CD8-positive, alpha-beta T cell (primary cell): ENCODE measurements at regions of chr4 and their contacts with region 1.

Region 1: GRCh38 chr4:173318648-173319211 is 15.4 kb downstream of the HMGB2 start:
- DNase-seq: peak in 2 of 9 experiments; percentile 48 to 60
- ATAC-seq: peak; percentile 66
- H3K4me3 ChIP-seq: no peak overlapping the region
- H3K4me3 Mint-ChIP-seq: no peak overlapping the region
- H3K27ac ChIP-seq: no peak overlapping the region
- H3K27ac Mint-ChIP-seq: no peak overlapping the region
- H3K4me1 ChIP-seq: no peaks in the 10 kb centered on the region
- H3K4me1 Mint-ChIP-seq: no peaks in the 10 kb centered on the region
- H3K27me3 ChIP-seq: no peaks in the 10 kb centered on the region
- H3K27me3 Mint-ChIP-seq: no peaks in the 10 kb centered on the region
- CTCF ChIP-seq: peak; percentile 66

Region 2: DNA sequence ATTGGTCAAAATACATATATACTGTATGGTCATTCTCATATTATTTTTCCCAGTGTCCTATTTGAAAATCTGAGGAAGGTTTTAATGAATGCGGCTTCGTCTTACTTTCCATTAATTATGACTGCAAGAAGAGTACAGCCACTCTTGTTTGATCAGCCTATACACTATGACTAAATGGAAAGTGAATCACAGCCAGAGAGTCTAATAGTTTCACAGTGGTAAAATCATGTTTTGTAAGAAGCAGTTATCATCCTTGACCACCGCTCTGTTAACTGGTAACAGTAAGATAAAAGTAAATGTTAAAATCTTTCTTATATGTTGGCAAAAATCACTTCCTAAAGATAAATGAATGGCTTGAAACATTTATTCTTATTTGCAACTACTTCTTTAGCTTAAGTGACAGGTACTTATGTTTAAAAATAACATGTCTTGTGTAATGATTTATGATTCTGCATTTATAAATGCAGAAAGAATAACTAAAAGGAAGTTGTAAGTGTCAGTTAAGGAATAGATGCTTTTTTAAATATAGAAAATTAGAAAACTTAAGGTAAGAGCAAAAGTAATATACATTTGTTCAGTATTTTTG is 136.9 kb before region 1 on chr4:
- CTCF ChIA-PET with region 1: no interaction called
- POLR2A ChIA-PET with region 1: no interaction called
- intact Hi-C with region 1: no loop called
- DNase-seq: no peak
- ATAC-seq: no peak
- H3K4me3 ChIP-seq: no peak overlapping the region
- H3K4me3 Mint-ChIP-seq: no peak overlapping the region
- H3K27ac ChIP-seq: no peak overlapping the region
- H3K27ac Mint-ChIP-seq: no peak overlapping the region
- H3K4me1 ChIP-seq: no peaks in the 10 kb centered on the region
- H3K4me1 Mint-ChIP-seq: peaks cover 27% of the 10 kb centered on the region
- H3K27me3 ChIP-seq: no peaks in the 10 kb centered on the region
- H3K27me3 Mint-ChIP-seq: no peaks in the 10 kb centered on the region
- CTCF ChIP-seq: no peak

Region 3: GRCh38 chr4:173230062-173230461 is 88.7 kb before region 1 on chr4:
- CTCF ChIA-PET with region 1: no interaction called
- POLR2A ChIA-PET with region 1: no interaction called
- intact Hi-C with region 1: no loop called
- DNase-seq: no peak
- ATAC-seq: no peak
- H3K4me3 ChIP-seq: no peak overlapping the region
- H3K4me3 Mint-ChIP-seq: no peak overlapping the region
- H3K27ac ChIP-seq: no peak overlapping the region
- H3K27ac Mint-ChIP-seq: no peak overlapping the region
- H3K4me1 ChIP-seq: no peaks in the 10 kb centered on the region
- H3K4me1 Mint-ChIP-seq: peaks cover 9% of the 10 kb centered on the region
- H3K27me3 ChIP-seq: no peaks in the 10 kb centered on the region
- H3K27me3 Mint-ChIP-seq: no peaks in the 10 kb centered on the region
- CTCF ChIP-seq: no peak

Region 4: DNA sequence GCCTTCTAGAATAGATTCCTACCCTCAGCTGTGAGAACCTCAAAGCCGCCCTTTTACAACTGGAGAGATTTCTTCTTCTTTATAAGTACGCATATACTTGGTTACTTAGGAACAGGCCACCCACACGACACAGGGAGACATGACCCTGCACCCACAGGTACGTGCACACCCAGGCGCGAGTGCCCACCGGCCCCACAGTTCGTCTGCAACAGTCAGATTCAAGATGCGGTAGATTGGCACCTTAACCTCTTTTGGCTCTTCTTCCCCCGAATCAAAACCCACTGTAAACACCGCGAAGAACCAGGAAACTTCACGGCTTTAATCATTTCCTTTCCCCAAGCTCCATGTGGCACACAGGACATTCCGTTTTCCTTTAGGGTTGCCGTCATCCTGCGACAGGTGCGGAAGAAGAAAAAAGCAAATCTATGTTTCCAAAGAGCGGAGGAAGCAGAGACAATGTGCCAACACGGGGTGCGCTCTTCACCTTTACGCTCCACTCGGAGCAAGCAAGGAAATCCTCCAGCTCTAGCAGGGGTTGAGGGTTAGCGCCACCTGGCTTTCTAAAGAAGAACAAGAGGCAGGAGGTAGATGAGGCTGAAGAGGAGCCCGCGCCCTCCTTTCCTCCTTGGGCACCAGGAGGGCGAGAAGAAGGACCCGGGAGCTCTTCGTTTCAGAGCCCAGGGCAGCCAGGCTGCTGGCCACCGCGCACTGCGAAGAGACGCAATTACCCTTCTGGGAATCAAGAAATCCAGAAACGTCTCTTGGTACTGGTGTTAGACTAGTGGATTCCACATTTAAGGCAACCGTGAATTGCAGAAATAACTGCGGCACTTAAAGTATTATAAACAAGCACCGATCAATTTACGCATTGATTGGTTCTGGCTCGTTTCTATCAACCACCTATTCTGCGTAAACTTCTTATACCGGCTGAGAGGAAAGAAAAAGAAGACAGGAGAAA is 175.6 kb after region 1 on chr4:
- CTCF ChIA-PET with region 1: interaction called, 4 read pairs
- POLR2A ChIA-PET with region 1: no interaction called
- intact Hi-C with region 1: loop called (anchors 1 to 5 kb)
- DNase-seq: peak in 8 of 9 experiments; percentile 29 to 80 (median 54)
- ATAC-seq: peak; percentile 92
- H3K4me3 ChIP-seq: peak overlapping the region; percentile 40 to 42
- H3K4me3 Mint-ChIP-seq: peak overlapping the region; percentile 77
- H3K27ac ChIP-seq: no peak overlapping the region
- H3K27ac Mint-ChIP-seq: no peak overlapping the region
- H3K4me1 ChIP-seq: peaks cover 4% of the 10 kb centered on the region
- H3K4me1 Mint-ChIP-seq: peaks cover 7% of the 10 kb centered on the region
- H3K27me3 ChIP-seq: no peaks in the 10 kb centered on the region
- H3K27me3 Mint-ChIP-seq: peaks cover 40% of the 10 kb centered on the region
- CTCF ChIP-seq: peak; percentile 55

Region 5: GRCh38 chr4:174120446-174121295 is 801.9 kb after region 1 on chr4:
- CTCF ChIA-PET with region 1: no interaction called
- POLR2A ChIA-PET with region 1: no interaction called
- intact Hi-C with region 1: loop called in 1 of 2 experiments (anchors 10 kb)
- DNase-seq: peak in 2 of 9 experiments; percentile 15 to 30
- ATAC-seq: no peak
- H3K4me3 ChIP-seq: no peak overlapping the region
- H3K4me3 Mint-ChIP-seq: no peak overlapping the region
- H3K27ac ChIP-seq: no peak overlapping the region
- H3K27ac Mint-ChIP-seq: no peak overlapping the region
- H3K4me1 ChIP-seq: no peaks in the 10 kb centered on the region
- H3K4me1 Mint-ChIP-seq: peaks cover 4% of the 10 kb centered on the region
- H3K27me3 ChIP-seq: no peaks in the 10 kb centered on the region
- H3K27me3 Mint-ChIP-seq: peaks cover 39% of the 10 kb centered on the region
- CTCF ChIP-seq: peak; percentile 18